ENCODE measurements at regions of chr2 and their contacts with region 1.

Region 1: GRCh38 chr2:26555246-26556133 is 77.6 kb upstream of the OTOF start:
- DNase-seq: peak in 1 of 2 experiments; percentile 38
- H3K4me3 ChIP-seq: no peak overlapping the region
- H3K4me3 Mint-ChIP-seq: no peak overlapping the region
- H3K27ac Mint-ChIP-seq: no peak overlapping the region
- H3K4me1 ChIP-seq: no peaks in the 10 kb centered on the region
- H3K4me1 Mint-ChIP-seq: no peaks in the 10 kb centered on the region
- H3K27me3 ChIP-seq: no peaks in the 10 kb centered on the region
- H3K27me3 Mint-ChIP-seq: peaks cover 22% of the 10 kb centered on the region
- CTCF ChIP-seq: peak in 1 of 2 experiments; percentile 27

Region 2: DNA sequence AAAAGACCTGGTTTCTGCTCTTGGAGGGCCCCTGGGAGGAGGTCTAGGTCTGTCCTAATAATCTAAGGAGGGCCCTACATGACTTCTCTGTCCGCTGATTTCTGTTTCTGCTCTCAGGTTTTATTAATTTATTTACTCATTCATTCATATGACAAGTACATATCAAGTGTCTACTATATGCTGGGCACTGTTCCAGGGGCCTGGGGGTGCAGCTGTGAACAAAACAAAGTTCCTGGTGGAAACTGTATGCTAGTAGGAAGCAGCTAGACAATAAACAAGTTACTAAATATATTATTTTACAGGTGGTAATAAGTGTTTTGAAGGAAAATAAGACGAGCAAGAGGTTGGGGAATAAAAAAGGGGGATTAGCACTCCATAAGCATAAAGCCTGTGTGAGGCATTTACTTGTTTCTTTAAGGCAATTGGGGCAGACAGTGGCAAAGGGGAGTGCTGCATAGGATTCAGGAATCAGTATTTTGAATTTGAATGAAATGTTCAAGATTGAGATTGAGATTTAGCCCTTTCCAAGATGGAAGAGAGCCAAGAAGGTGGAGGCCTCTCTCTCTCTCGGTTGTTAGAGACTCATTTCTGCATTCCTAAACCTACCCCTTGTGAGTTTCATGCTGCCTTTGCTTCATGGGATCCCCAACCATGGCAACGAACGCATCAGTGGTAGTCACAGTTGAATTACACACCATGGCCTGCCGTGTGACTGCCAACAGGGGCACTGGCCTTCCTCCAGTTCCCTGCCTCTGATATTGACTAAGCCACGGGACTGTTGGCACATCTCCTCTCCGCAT is 125.5 kb before region 1 on chr2:
- CTCF ChIA-PET with region 1: no interaction called
- POLR2A ChIA-PET with region 1: no interaction called
- intact Hi-C with region 1: no loop called
- DNase-seq: no peak
- H3K4me3 ChIP-seq: no peak overlapping the region
- H3K4me3 Mint-ChIP-seq: no peak overlapping the region
- H3K27ac Mint-ChIP-seq: no peak overlapping the region
- H3K4me1 ChIP-seq: peaks cover 5% of the 10 kb centered on the region; the same call in 1 of the 2 replicates
- H3K4me1 Mint-ChIP-seq: no peaks in the 10 kb centered on the region
- H3K27me3 ChIP-seq: no peaks in the 10 kb centered on the region
- H3K27me3 Mint-ChIP-seq: no peaks in the 10 kb centered on the region
- CTCF ChIP-seq: no peak

Region 3: GRCh38 chr2:26521054-26521912 is 34.2 kb before region 1 on chr2:
- CTCF ChIA-PET with region 1: interaction called, 7 read pairs
- POLR2A ChIA-PET with region 1: no interaction called
- intact Hi-C with region 1: loop called (anchors 1 kb)
- DNase-seq: peak; percentile 60 to 71
- H3K4me3 ChIP-seq: no peak overlapping the region
- H3K4me3 Mint-ChIP-seq: no peak overlapping the region
- H3K27ac Mint-ChIP-seq: no peak overlapping the region
- H3K4me1 ChIP-seq: no peaks in the 10 kb centered on the region
- H3K4me1 Mint-ChIP-seq: no peaks in the 10 kb centered on the region
- H3K27me3 ChIP-seq: no peaks in the 10 kb centered on the region; the same call in 1 of the 2 replicates
- H3K27me3 Mint-ChIP-seq: peaks cover 5% of the 10 kb centered on the region
- CTCF ChIP-seq: peak; percentile 79 to 88

Measured in Caco-2 (cell line).